ENCODE measurements at regions of chr9 and their contacts with region 1.

Region 1: DNA sequence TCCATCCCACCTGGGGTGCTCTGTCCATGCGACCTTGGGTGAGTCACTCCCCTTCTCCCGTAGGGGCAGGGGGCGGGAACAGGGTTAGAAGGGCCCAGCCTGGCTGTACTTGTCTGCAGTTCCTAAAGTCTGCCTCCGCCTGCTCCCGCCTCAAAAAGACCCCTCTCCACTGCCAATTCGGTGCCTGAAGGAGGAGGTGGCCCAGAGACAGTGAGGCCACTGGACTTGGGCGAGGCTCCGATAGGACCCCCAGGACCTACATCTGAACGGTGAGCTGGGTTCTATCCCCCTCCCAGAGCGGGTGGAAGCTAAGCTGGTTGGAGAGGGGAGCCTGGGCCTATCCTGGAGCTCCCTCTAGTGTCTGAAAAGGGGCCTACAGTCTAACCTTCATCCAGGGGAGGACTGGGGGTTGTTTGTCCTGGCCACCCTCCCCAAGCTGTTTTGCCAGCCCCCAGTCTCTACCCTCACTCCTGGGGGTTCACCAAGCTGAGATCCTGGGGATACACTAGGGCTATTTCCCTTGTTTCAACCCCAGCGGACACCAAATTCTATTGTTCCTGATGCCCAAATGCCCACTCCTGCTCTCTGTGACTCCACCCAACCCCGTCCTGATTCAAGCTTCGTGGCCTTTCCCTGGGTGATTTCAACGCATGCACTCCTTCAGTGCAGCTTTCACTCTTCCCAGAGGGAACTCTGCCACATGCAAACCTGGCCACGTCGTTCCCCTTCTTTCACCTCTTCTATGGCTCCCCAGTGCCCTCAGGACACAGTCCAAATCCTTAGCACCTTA is 6.1 kb upstream of the CRB2 start:
- DNase-seq: no peak
- ATAC-seq: peak; percentile 83
- H3K4me3 ChIP-seq: no peak overlapping the region
- H3K27ac ChIP-seq: no peak overlapping the region
- H3K4me1 ChIP-seq: peaks cover 14% of the 10 kb centered on the region
- H3K27me3 ChIP-seq: no peaks in the 10 kb centered on the region; a peak in 1 of 4 replicates
- CTCF ChIP-seq: peak; percentile 95 to 98 (median 97); a peak in 5 of 6 replicates
- EP300 ChIP-seq: no peak
- POLR2A ChIP-seq: no peak
- RAD21 ChIP-seq: peak; percentile 99

Region 2: DNA sequence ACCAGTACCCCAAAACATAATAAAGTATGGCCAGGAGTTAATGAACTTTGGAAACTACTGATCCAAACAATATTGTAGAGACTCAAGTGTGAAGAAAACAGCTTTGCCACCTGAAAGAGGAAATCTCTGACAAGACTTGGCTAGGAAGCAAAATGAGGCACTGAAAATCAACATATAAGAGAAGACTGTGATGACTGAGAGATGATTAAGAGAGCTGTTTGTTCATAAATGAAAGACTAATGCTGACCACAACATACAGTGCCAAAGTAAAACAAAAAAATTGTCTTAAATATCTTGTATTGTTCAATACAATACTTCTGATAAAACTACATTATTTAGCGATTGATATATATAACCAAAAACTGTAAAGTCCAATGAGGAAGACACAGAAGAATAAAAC is 451.9 kb before region 1 on chr9:
- CTCF ChIA-PET with region 1: interaction called, 12 read pairs
- POLR2A ChIA-PET with region 1: no interaction called
- RAD21 ChIA-PET with region 1: interaction called, 4 read pairs
- SMC1A ChIA-PET with region 1: interaction called, 6 read pairs
- in situ Hi-C with region 1: no loop called
- intact Hi-C with region 1: loop called (anchors 10 kb)
- DNase-seq: no peak
- ATAC-seq: peak; percentile 10; the same call in 1 of the 3 replicates
- H3K4me3 ChIP-seq: no peak overlapping the region
- H3K27ac ChIP-seq: no peak overlapping the region
- H3K4me1 ChIP-seq: peaks cover 6% of the 10 kb centered on the region
- H3K27me3 ChIP-seq: no peaks in the 10 kb centered on the region
- CTCF ChIP-seq: no peak
- EP300 ChIP-seq: no peak
- POLR2A ChIP-seq: no peak
- RAD21 ChIP-seq: no peak

Region 3: GRCh38 chr9:123073991-123074422 is 275.9 kb before region 1 on chr9:
- CTCF ChIA-PET with region 1: interaction called, 38 read pairs
- POLR2A ChIA-PET with region 1: no interaction called
- RAD21 ChIA-PET with region 1: interaction called, 13 read pairs
- SMC1A ChIA-PET with region 1: interaction called, 22 read pairs
- in situ Hi-C with region 1: no loop called
- intact Hi-C with region 1: no loop called
- DNase-seq: no peak
- ATAC-seq: no peak
- H3K4me3 ChIP-seq: no peak overlapping the region
- H3K27ac ChIP-seq: no peak overlapping the region
- H3K4me1 ChIP-seq: peaks cover 5% of the 10 kb centered on the region; the same call in 1 of the 2 replicates
- H3K27me3 ChIP-seq: no peaks in the 10 kb centered on the region
- CTCF ChIP-seq: no peak
- EP300 ChIP-seq: no peak
- POLR2A ChIP-seq: no peak
- RAD21 ChIP-seq: no peak

Region 4: DNA sequence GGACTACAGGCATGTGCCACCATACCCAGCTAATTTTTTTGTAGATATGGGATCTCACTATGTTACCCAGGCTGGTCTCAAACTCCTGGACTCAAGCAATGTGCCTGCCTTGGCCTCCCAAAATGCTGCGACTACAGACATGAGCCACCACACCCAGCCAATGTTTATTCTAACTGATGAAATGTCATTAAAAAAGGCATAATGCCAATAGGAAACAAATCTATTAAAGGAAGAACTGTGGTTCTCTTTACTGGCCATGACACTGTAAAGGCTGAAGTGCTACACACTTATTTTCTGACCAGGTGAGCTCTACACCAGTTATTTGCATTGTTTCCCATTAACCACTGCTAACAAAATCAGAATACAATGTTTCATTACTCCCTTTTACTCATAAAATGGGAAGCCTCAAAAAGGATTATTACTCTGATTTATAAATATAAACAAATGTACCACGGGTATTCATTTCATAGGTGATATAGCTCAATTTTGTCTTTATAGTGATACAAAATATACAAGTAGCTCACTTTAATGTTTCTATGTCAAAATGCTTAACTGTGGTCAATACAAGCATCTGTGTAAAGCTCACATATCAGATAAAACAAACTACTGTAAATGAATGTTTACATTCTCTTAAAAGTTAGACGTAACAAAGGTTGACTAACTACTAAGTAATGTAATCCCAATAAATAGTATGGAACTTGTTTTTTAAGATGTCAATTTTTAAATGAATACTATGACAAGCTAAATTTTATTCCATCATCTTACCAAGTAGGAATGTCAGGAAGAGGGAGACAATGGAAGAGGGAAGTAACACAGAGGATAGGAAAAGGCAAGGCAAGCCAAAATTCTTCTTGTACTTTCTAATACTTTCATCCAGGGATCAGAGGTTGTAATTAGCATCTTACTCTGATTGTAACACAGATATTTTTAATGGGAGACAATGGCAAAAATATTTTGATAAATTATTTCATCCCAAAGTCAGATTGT is 187.2 kb before region 1 on chr9:
- CTCF ChIA-PET with region 1: interaction called, 10 read pairs
- POLR2A ChIA-PET with region 1: no interaction called
- RAD21 ChIA-PET with region 1: interaction called, 4 read pairs
- SMC1A ChIA-PET with region 1: interaction called, 6 read pairs
- in situ Hi-C with region 1: no loop called
- intact Hi-C with region 1: no loop called
- DNase-seq: no peak
- ATAC-seq: no peak
- H3K4me3 ChIP-seq: no peak overlapping the region
- H3K27ac ChIP-seq: no peak overlapping the region
- H3K4me1 ChIP-seq: peaks cover 4% of the 10 kb centered on the region
- H3K27me3 ChIP-seq: no peaks in the 10 kb centered on the region
- CTCF ChIP-seq: no peak
- EP300 ChIP-seq: no peak
- POLR2A ChIP-seq: no peak
- RAD21 ChIP-seq: no peak

Region 5: GRCh38 chr9:123322273-123323195 is 27.4 kb before region 1 on chr9:
- CTCF ChIA-PET with region 1: interaction called, 12 read pairs
- POLR2A ChIA-PET with region 1: no interaction called
- RAD21 ChIA-PET with region 1: interaction called, 6 read pairs
- SMC1A ChIA-PET with region 1: interaction called, 268 read pairs
- in situ Hi-C with region 1: no loop called
- intact Hi-C with region 1: no loop called
- DNase-seq: no peak
- ATAC-seq: peak; percentile 82
- H3K4me3 ChIP-seq: peak overlapping the region; percentile 45
- H3K27ac ChIP-seq: peak overlapping the region; percentile 89
- H3K4me1 ChIP-seq: peaks cover 72% of the 10 kb centered on the region
- H3K27me3 ChIP-seq: no peaks in the 10 kb centered on the region
- CTCF ChIP-seq: no peak
- EP300 ChIP-seq: peak in 1 of 2 experiments; percentile 38; a peak in 3 of 4 replicates
- POLR2A ChIP-seq: peak; percentile 53
- RAD21 ChIP-seq: no peak

Region 6: DNA sequence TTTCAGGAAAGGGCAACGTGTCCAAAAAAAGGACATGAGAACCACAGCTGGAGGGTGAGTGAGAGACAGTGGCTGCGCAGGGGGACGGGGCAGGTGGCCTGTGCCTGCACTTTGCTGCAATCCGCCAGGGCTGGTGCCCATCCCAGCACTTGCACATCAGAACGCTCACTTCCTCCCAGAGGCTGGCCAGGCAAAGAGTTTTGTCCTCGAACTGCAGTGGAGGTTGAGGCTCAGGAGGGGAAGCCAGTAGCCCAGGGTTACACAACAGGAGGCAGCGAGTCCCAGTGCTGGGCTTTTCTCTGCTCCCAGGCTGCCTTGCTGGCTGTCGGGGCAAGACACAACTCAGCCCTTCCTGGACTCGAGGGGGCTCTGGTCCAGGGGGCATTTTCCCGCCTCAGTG is 39.2 kb after region 1 on chr9:
- CTCF ChIA-PET with region 1: interaction called, 58 read pairs
- POLR2A ChIA-PET with region 1: no interaction called
- RAD21 ChIA-PET with region 1: interaction called, 17 read pairs
- SMC1A ChIA-PET with region 1: interaction called, 21 read pairs
- in situ Hi-C with region 1: loop called (anchors 5 kb)
- intact Hi-C with region 1: loop called (anchors 1 kb)
- DNase-seq: no peak
- ATAC-seq: no peak
- H3K4me3 ChIP-seq: no peak overlapping the region
- H3K27ac ChIP-seq: no peak overlapping the region
- H3K4me1 ChIP-seq: no peaks in the 10 kb centered on the region
- H3K27me3 ChIP-seq: no peaks in the 10 kb centered on the region
- CTCF ChIP-seq: no peak
- EP300 ChIP-seq: no peak
- POLR2A ChIP-seq: no peak
- RAD21 ChIP-seq: no peak

Measured in GM12878 (cell line).